ENCODE measurements at regions of chr6 and their contacts with region 1.

Region 1: DNA sequence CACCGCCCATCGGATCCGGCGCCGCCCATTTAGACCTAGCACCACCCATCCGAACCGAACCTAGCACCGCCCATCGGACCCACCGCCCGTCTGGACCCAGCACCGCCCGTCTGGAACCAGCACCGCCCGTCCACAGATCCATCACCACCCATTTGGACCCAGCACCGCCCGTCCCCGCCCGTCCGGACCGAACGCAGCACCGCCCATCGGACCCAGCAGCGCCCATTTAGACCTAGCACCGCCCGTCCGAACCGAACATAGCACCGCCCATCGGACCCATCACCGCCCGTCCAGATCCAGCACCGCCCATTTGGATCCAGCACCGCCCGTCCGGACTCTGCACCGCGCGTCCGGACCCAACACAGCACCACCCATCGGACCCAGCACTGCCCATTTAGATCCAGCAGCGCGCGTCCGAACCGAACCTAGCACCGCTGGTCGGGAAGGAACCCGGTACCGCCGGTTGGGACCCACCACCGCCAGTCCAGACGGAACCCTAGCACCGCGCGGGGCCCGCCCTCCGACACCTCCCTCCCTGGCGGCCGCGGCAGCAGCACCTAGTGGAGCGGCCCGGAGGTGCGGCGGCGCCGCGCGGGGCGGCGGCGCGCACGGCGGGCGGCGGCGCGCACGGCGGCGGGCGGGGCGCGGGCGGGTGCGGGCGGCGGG is 348 bp upstream of the AFDN start:
- DNase-seq: peak; percentile 36 to 83 (median 58)
- ATAC-seq: peak; percentile 91
- H3K4me3 ChIP-seq: peak overlapping the region; percentile 80
- H3K4me3 Mint-ChIP-seq: peak overlapping the region; percentile 88
- H3K27ac ChIP-seq: no peak overlapping the region
- H3K27ac Mint-ChIP-seq: no peak overlapping the region
- H3K4me1 ChIP-seq: peaks cover 21% of the 10 kb centered on the region
- H3K4me1 Mint-ChIP-seq: peaks cover 13% of the 10 kb centered on the region
- H3K27me3 ChIP-seq: peaks cover 30 to 47% of the 10 kb centered on the region in 2 experiments
- H3K27me3 Mint-ChIP-seq: peaks cover 76% of the 10 kb centered on the region
- CTCF ChIP-seq: no peak

Region 2: DNA sequence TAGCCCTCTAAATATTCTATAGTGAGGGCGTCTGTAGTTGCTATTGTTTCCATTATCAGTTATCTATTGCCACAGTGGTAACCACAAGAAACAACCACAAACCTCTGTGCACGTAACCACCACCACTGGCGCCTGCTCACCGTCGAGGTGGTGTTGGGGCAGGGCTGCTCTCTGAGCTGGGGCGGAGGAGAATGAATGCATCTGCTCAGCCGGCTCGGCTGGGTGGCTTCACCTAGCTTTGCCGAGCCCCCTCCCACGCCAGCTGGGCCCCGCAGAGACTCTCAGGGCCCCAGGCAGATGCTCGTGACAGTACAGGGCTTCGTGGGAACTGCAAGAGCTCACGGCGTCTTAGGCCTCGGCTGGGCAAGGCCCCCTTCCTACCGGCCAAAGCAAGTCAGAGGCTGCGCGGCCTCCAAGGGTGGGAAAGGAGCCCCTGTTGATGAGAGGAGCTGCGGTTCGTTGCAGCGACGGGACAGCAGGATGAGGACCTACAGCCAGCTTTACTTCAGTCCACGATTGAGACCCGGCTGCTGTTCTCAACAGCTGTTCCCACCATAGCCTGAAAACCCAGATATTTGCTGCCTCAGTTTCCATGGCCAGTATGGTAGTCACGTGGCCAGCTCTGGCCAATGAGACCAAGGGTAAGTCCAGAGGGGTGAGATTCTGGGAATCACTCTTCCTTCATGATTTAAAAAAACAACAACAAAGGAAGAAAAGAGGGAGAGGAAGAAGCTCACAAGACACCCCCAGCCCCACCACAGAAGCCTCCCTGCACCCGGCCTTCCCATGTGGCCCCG is 119.9 kb before region 1 on chr6:
- CTCF ChIA-PET with region 1: no interaction called
- POLR2A ChIA-PET with region 1: no interaction called
- intact Hi-C with region 1: loop called in 1 of 2 experiments (anchors 5 kb)
- DNase-seq: peak; percentile 35 to 82 (median 52)
- ATAC-seq: peak; percentile 93
- H3K4me3 ChIP-seq: no peak overlapping the region
- H3K4me3 Mint-ChIP-seq: peak overlapping the region; percentile 65
- H3K27ac ChIP-seq: no peak overlapping the region
- H3K27ac Mint-ChIP-seq: peak overlapping the region; percentile 4
- H3K4me1 ChIP-seq: peaks cover 31% of the 10 kb centered on the region
- H3K4me1 Mint-ChIP-seq: peaks cover 41% of the 10 kb centered on the region
- H3K27me3 ChIP-seq: peaks cover 34 to 42% of the 10 kb centered on the region in 2 experiments
- H3K27me3 Mint-ChIP-seq: peaks cover 81% of the 10 kb centered on the region
- CTCF ChIP-seq: no peak

Region 3: GRCh38 chr6:167786853-167787675 is 39.3 kb before region 1 on chr6:
- CTCF ChIA-PET with region 1: no interaction called
- POLR2A ChIA-PET with region 1: no interaction called
- intact Hi-C with region 1: no loop called
- DNase-seq: peak in 1 of 14 experiments; percentile 6
- ATAC-seq: no peak
- H3K4me3 ChIP-seq: no peak overlapping the region
- H3K4me3 Mint-ChIP-seq: no peak overlapping the region
- H3K27ac ChIP-seq: no peak overlapping the region
- H3K27ac Mint-ChIP-seq: no peak overlapping the region
- H3K4me1 ChIP-seq: no peaks in the 10 kb centered on the region
- H3K4me1 Mint-ChIP-seq: no peaks in the 10 kb centered on the region
- H3K27me3 ChIP-seq: no peaks in the 10 kb centered on the region
- H3K27me3 Mint-ChIP-seq: peaks cover 14% of the 10 kb centered on the region
- CTCF ChIP-seq: no peak